ENCODE measurements at regions of chr5 and their contacts with region 1.

Region 1: GRCh38 chr5:147464211-147464610 is 45.7 kb downstream of the DPYSL3 start:
- DNase-seq: no peak

Region 2: GRCh38 chr5:147382776-147383175 is 81.4 kb before region 1 on chr5:
- intact Hi-C with region 1: no loop called
- DNase-seq: peak in 4 of 42 donors; percentile 5 to 26 (median 13)

Region 3: DNA sequence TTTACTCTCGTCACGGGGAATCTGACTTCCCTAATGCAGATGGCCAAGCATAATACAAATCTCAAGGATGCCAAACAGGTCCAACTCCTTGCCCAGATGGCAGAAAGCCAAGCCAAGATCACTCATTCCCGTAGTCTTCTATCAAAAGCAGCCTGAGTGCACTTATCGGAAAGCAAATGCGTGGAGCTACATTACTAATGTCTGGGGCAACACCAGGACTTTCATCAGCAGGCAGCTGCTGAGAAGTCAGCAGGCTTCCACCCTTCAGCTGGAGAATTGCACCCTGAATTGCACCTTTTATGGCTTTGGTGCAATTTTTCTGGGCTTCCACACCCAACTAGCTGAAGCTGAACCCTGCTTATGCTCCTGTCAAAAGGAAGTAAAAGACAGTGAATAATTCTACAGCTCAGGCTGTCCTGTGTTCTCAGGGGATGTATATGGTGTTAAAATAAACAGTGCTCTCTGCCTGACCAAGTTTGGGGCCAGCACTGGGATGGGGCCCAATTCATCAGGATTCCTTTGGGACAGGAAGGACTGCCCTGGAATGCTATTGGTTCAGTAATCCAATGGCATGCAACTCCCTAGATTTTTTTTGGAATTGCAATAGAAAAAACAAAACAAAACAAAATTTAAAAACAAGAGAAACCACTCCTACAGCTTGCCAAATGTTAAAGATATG is 46.9 kb before region 1 on chr5:
- intact Hi-C with region 1: no loop called
- DNase-seq: peak in 5 of 42 donors; percentile 8 to 67 (median 46)

Region 4: DNA sequence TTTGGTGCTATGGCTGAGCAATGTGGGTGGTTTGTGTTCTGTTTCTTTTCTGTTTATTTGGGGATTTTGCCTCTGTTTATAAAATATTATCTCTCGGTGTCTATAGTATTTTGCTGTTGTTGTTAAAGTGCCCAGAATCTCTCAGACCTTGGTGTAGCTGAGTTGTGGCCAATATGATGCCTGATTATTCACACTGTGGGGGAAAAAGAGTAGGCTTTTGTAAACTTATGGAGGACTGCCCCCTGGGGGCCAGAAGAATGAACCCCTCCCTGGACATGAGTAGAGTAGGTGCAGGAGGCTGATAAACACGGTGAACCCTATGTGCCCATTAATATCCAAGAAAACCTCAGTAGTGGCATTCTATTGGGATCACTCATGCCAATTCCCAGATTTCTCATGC is 94.6 kb after region 1 on chr5:
- intact Hi-C with region 1: loop called (anchors 10 kb)
- DNase-seq: peak in 28 of 42 donors; percentile 4 to 69 (median 34)

Measured in head of caudate nucleus (tissue), 42 donors.